ENCODE measurements at regions of chr2 and their contacts with region 1.

Region 1: GRCh38 chr2:226223704-226224103 is 575.9 kb downstream of the IRS1 start:
- DNase-seq: no peak
- ATAC-seq: no peak

Region 2: GRCh38 chr2:226198956-226199355 is 24.7 kb before region 1 on chr2:
- intact Hi-C with region 1: loop called (anchors 2 kb)
- DNase-seq: no peak
- ATAC-seq: no peak

Region 3: GRCh38 chr2:226414335-226414734 is 190.6 kb after region 1 on chr2:
- intact Hi-C with region 1: no loop called
- DNase-seq: no peak
- ATAC-seq: peak; percentile 36

Region 4: DNA sequence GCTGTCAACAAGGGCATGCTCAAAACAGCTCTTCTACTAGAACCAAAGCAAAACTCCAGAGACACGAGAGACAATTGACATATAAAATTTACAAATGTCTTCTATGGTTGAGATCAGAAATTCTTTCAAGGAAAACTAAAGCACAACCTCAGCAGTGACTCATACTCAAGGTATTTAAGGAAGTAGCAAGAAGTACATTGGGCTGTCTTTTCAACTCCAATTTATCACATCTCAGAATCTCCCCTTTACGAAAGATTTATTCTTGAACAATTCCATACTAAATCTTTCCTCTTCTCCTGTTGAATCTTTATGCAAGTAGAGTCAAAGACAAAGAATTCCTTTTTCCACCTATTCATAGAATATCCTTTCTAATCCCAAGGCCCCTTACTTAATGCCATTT is 251.9 kb after region 1 on chr2:
- intact Hi-C with region 1: no loop called
- DNase-seq: no peak
- ATAC-seq: no peak

Region 5: DNA sequence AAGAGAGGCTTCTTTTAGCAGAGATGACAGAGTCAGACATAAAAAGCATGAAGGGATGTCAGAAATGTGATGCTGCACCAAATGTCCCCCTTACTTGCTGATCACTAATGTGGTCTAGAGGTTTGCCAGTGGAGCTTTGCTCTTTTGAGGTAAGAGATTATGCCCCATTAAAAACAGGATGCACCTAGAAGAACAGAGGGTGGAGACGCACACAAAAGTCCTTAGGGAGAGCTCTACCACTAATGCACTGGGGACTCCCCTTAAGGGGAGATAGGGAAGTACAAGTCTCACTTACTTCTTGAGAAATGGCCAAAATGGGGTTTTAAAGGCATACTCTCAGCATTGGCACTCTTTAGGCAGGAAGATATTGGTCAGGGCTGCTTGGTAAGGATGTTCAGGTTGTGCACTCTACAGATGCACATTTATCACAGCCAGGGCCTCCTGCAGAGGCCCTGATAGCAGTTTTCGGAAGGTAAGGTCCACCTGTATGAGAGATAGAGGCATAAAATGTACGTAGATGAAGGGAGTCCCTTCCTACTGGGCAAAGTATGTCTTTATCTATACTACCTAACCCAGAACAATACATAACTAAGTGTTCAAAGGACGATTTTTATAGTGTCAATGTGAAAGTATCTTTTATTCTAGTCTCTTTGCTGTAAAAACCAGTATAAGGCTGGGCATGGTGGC is 1181.0 kb after region 1 on chr2:
- intact Hi-C with region 1: no loop called
- DNase-seq: no peak
- ATAC-seq: no peak

Measured in left ventricle myocardium superior (tissue), 1 donor.